ENCODE measurements at regions of chr1 and their contacts with region 1.

Region 1: DNA sequence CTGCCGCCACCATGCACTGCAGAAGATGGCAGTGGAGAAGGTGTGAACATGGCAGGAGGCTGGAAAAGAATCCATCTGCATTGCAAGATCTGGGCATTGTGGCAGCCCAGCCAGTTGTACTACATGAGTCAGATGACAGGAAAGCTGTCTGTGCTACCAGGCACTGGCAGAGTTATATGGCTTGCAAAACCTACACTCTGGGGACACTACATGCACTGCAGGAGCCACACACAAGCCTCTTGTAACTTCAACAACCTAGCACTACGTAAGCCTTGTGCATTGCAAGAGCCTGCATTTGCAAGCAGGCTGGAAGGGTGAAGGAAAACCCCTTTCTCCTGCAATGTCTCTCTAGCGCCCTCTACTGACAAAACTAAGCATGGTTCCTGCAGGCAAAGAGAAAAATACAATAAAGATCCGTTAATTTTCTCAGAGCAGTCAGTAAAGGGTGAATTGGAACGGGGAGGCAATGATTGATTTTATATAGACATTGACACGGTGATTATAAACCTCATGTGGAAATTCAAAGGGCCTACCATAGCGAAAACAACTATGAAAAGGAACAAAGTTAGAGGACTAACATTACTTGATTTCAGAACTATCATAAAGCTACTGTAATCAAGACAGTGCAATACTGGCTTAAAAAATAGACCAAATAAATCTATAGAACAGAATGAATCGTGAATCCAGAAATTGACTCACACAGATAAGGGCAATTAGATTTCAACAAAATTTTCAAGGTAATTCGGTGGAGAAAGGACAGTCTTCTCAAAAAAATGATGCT is 26.2 kb upstream of the DYNLT5 start:
- DNase-seq: peak; percentile 82
- H3K4me3 ChIP-seq: no peak overlapping the region
- H3K27ac ChIP-seq: no peak overlapping the region
- H3K4me1 ChIP-seq: peaks cover 31% of the 10 kb centered on the region
- H3K27me3 ChIP-seq: no peaks in the 10 kb centered on the region
- CTCF ChIP-seq: peak; percentile 83 to 84
- POLR2A ChIP-seq: no peak

Region 2: DNA sequence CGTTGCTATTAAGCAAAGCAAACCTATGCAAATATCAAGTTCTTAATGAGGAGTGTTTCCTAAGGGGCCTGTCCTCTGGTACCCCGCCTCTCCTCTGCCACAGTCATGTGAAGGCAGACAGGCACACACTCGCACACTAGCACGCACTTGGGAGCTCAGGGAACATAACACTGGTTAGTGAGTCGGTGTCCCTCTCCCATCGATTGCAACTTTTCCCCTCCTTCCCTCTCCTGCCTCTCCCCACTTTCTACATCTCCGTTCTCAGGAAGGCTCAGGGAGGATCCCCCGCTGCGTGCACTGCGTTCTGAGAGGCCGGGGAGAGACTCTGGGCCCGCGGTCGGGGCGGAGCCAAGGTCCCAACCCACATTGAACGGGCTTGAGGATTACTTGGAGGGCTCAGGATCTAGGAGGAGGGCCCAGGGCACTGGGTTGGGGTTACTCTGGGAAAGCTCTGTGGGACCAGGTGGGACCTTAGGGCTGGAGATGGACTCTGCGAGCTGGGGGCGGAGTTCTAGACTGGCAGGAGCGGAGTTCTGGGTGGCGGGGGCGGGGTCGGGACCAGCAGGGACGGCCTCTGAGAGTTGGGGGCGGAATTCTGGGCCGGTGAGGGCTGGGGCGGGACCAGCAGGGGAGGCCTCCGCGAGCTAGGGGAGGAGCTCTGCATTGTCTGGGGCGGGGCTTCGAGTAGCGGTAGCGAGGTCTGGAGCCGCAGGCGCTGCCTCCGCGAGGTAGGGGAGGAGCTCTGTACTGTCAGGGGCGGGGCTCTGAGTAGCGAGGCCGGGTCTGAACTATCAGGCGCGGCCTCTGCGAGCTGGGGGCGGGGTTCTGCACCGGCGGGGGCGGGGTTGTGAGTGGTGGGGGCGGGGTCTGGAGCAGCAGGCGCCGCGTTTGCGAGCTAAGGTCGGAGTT is 1306.1 kb before region 1 on chr1:
- CTCF ChIA-PET with region 1: no interaction called
- POLR2A ChIA-PET with region 1: no interaction called
- dilution Hi-C with region 1: no loop called
- intact Hi-C with region 1: loop called (anchors 2 kb)
- DNase-seq: peak; percentile 99
- H3K4me3 ChIP-seq: peak overlapping the region; percentile 64 to 76 (median 71)
- H3K27ac ChIP-seq: peak overlapping the region; percentile 62
- H3K4me1 ChIP-seq: peaks cover 37% of the 10 kb centered on the region
- H3K27me3 ChIP-seq: no peaks in the 10 kb centered on the region
- CTCF ChIP-seq: no peak
- POLR2A ChIP-seq: peak; percentile 5

Region 3: DNA sequence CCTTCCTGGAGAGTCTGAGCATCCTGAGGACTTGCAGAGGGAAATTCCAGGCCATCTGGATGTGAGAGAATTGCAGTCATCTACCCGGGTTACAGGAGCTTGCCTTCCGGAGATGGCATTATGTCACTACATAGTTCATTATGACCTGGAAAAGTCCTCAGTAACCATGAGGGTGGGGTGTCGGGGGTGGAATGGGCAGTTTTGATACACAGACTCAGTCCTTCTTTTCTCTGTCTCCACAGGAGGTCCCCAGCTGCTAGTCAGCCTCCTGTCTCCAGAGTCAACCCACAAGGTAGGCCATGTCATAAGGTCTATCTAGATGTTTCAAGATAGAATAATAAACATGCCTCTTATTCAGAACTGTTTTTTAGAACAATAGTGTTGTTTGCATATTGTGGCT is 460.3 kb before region 1 on chr1:
- CTCF ChIA-PET with region 1: no interaction called
- POLR2A ChIA-PET with region 1: no interaction called
- dilution Hi-C with region 1: no loop called
- intact Hi-C with region 1: loop called (anchors 1 kb)
- DNase-seq: peak; percentile 83
- H3K4me3 ChIP-seq: no peak overlapping the region
- H3K27ac ChIP-seq: peak overlapping the region; percentile 89
- H3K4me1 ChIP-seq: peaks cover 66% of the 10 kb centered on the region
- H3K27me3 ChIP-seq: no peaks in the 10 kb centered on the region
- CTCF ChIP-seq: no peak
- POLR2A ChIP-seq: no peak

Region 4: DNA sequence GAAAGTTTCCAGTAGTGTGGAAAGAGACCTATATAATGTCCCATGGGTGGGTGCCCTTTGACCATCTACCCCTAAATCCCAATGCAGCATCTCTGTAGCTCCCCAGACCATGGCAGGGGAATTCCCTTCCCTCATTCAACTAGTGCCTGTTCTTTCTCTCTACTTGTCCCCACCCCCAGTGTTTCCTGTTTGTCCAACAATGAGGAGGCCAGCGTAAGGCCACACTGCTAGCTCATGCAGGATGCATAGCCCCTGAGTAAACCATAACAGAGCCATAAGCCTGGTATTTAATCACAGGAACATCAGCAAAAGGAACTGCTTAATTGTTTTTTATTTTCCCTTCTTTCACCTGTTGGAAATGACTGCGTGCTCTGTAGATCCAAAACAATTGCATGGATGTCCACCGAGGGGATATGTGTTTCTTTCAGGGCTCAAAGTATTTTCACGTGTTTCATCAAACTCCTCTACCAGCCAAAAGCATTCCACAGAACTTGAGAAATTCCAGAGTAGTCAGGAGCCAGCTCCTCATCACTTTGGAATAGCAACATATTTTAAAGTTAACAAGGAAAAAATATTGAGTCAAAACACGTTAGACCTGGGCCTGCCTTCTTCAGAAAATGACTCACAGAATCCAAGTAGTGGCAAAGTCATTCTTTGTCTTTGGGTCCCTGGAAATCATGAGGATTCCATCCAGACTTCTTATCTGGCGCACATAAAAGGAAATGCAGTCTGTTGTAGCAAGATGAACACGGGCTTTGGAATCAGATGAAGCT is 354.7 kb before region 1 on chr1:
- CTCF ChIA-PET with region 1: no interaction called
- POLR2A ChIA-PET with region 1: no interaction called
- dilution Hi-C with region 1: no loop called
- intact Hi-C with region 1: loop called (anchors 1 kb)
- DNase-seq: peak; percentile 98
- H3K4me3 ChIP-seq: peak overlapping the region in 1 of 3 experiments; percentile 29
- H3K27ac ChIP-seq: peak overlapping the region; percentile 99
- H3K4me1 ChIP-seq: peaks cover 60% of the 10 kb centered on the region
- H3K27me3 ChIP-seq: no peaks in the 10 kb centered on the region
- CTCF ChIP-seq: no peak
- POLR2A ChIP-seq: no peak

Region 5: DNA sequence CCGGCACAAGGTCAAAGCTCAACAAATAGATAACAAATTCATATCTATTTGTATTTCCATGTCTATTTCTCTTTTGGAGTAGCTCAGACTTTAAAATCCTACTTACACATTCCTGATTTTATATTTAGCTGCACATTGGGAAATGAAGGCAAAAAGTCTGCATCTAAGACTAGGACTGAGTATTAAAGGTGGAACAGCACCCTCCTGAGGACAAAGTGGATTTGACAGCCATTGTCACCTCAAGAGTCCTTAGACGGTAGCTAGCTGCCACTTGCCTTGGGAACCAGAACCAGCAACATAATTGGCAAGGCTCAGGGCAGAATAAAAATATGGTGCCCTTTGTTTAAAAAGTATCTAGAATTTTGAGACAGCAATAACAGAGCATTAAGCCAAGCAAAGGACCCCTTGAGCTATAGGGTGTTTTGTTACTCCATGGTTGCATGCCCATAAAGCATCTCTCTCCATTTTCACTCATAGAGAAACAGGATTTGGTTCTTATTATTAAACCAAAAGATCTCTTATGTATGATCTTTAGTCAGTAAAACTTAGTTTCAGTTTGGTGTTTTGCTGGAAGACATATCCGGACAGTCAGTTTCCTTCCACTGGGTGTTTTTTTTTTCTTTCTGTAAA is 222.1 kb before region 1 on chr1:
- CTCF ChIA-PET with region 1: interaction called, 80 read pairs
- POLR2A ChIA-PET with region 1: no interaction called
- dilution Hi-C with region 1: no loop called
- intact Hi-C with region 1: loop called (anchors 1 kb)
- DNase-seq: peak; percentile 88
- H3K4me3 ChIP-seq: no peak overlapping the region
- H3K27ac ChIP-seq: no peak overlapping the region
- H3K4me1 ChIP-seq: peaks cover 5% of the 10 kb centered on the region
- H3K27me3 ChIP-seq: no peaks in the 10 kb centered on the region
- CTCF ChIP-seq: peak; percentile 58 to 76
- POLR2A ChIP-seq: no peak

Region 6: DNA sequence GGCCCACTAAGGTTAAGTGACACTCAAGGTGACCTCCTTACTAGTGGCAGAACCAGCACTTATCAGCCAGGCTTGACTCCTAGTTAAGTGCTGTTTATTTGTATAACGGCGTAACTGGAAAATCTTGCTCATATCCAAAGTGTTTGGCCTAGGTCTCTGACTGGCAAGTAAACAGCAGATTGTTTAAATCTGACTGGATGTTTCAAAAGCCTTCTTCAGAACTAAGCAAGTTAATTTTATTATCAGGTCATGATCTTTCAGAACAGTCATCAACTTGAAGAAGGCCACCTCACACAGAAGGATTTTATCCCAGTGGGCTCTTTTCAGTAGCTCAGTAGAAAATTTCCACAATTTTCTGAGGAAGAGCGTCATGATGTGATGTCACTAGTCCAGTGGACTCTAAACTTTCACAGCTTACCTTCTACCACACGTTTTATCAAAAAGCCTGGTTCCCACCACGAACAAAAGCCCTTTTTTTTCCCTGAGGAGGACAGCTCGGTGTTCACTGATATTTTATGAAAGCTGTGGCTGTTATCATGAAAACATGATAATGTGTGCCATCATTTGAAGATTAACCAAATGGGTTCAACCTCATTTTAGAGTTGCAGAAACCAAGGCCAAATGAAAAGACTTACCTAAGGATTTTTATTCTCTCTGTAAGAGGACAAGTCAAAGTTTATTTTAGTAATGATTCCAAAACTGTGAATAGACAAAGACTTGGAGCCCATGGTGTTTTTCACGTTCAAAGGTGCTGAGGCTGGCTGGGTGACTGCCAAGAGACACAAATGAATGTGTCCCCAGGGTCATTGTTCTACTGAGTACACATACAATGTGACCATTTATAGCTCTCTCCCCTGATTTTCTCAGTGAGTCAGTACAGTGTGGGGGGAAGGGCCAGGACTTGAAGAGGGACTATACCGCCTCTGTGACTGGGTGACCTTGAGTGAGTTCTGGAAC is 183.0 kb before region 1 on chr1:
- CTCF ChIA-PET with region 1: interaction called, 8 read pairs
- POLR2A ChIA-PET with region 1: no interaction called
- dilution Hi-C with region 1: no loop called
- intact Hi-C with region 1: loop called (anchors 1 kb)
- DNase-seq: peak; percentile 97
- H3K4me3 ChIP-seq: no peak overlapping the region
- H3K27ac ChIP-seq: peak overlapping the region; percentile 90
- H3K4me1 ChIP-seq: peaks cover 36% of the 10 kb centered on the region
- H3K27me3 ChIP-seq: no peaks in the 10 kb centered on the region
- CTCF ChIP-seq: no peak
- POLR2A ChIP-seq: no peak

Region 7: GRCh38 chr1:66648901-66649595 is 77.0 kb before region 1 on chr1:
- CTCF ChIA-PET with region 1: no interaction called
- POLR2A ChIA-PET with region 1: no interaction called
- dilution Hi-C with region 1: no loop called
- intact Hi-C with region 1: no loop called
- DNase-seq: no peak
- H3K4me3 ChIP-seq: no peak overlapping the region
- H3K27ac ChIP-seq: no peak overlapping the region
- H3K4me1 ChIP-seq: no peaks in the 10 kb centered on the region
- H3K27me3 ChIP-seq: no peaks in the 10 kb centered on the region
- CTCF ChIP-seq: no peak
- POLR2A ChIP-seq: no peak

Region 8: DNA sequence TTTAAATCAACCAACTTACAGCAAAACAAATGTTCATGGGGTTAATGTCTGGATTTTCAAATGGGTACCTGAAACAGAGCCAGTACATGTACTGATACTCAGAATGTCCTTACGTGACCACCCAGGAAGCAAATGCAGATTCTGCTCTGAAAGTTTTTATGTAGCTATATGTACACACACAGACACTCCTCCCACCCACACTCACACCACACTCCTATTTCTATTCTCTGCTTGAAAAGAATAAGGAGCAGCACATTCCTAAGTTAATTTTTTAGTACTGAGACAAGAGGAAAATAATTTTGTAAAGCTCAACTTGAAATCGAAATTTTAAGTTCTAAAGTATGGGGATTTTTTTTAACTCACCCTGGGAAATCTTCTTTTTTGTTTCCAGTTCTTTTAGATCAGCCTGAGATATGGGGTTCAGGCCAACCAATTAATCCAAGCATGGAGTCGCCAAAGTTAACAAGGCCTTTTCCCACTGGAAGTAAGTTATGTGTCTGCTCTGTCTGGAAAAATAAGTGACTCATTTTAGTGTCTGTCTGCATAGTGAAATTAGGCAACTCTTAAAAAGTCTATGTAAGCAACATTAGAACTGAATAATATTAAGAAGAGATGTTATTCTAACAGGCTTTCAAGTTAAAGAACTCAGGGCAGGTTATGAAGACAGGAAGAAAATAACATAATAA is 49.3 kb before region 1 on chr1:
- CTCF ChIA-PET with region 1: interaction called, 16 read pairs
- POLR2A ChIA-PET with region 1: no interaction called
- dilution Hi-C with region 1: no loop called
- intact Hi-C with region 1: loop called (anchors 1 kb)
- DNase-seq: peak; percentile 94
- H3K4me3 ChIP-seq: no peak overlapping the region
- H3K27ac ChIP-seq: peak overlapping the region; percentile 74
- H3K4me1 ChIP-seq: peaks cover 31% of the 10 kb centered on the region
- H3K27me3 ChIP-seq: no peaks in the 10 kb centered on the region
- CTCF ChIP-seq: no peak
- POLR2A ChIP-seq: no peak

Measured in endothelial cell of umbilical vein (primary cell).